GM10248 (cell line): ENCODE measurements at regions of chr14 and their contacts with region 1.

Region 1: DNA sequence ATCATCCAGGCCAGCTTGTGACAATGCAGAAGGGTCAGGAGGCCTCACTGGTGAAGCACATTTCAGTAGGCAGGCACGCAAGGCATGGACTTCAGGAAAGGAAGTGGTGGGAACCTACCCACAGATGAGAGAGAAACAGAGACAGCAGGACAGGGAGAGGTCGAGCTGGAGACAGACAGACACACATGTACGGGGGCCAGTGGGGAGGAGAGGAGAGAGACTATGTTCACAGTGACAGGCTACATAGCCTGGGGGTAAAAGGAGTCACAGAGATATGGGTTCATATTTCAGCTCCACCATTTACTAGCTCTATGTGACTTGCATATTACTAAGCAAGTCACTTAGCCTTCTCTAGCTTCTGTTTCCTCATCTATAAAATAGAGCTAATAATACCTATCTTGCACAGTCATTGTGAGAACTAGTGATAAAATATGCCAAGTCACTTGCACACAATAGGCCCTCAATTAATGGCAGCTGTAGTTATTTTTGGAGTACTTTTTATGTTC is 91.1 kb upstream of the FUT8 start:
- DNase-seq: no peak
- CTCF ChIP-seq: no peak

Region 2: GRCh38 chr14:65287264-65288131 is 33.9 kb before region 1 on chr14:
- CTCF ChIA-PET with region 1: interaction called, 19 read pairs
- POLR2A ChIA-PET with region 1: no interaction called
- DNase-seq: peak; percentile 81
- CTCF ChIP-seq: no peak

Region 3: GRCh38 chr14:65302571-65303189 is 18.7 kb before region 1 on chr14:
- CTCF ChIA-PET with region 1: interaction called, 41 read pairs
- POLR2A ChIA-PET with region 1: interaction called, 50 read pairs
- DNase-seq: peak; percentile 67
- CTCF ChIP-seq: no peak

Region 4: DNA sequence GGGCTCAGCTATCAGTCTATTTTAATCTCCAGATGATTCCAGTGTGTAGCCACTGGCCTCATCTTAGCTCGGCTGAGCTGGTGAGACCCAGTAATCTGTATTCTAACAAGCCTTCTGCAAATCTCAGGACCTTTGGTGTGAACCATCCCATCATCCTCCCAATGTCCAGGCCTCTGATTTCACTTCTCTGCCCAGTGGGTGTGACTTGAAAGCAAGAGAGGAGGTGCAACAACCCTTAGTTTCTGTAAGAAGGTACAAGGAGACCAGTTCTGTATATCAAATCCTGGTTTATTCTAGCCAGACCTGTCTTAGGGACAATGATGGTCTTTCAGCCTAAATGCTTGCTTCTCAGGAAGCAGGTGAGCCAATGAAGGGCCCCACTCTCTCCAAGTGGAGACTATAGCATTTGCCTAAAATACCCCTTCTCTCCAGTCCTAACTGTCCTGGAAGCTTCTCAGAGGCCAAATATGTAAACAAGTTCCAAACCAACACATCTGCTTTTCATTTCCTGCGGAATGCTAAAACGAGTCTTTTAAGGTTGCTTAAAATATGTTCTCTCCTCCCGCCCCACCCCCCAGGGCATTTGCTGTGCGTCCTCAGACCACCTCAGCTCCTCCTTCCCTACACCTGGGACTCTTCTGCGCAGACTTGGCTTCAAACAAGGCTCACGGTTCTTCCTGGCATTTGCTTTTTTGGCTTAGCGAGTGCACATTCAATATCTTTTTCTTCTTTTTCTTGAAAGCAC is 12.7 kb after region 1 on chr14:
- CTCF ChIA-PET with region 1: interaction called, 40 read pairs
- POLR2A ChIA-PET with region 1: no interaction called
- DNase-seq: no peak
- CTCF ChIP-seq: no peak

Region 5: DNA sequence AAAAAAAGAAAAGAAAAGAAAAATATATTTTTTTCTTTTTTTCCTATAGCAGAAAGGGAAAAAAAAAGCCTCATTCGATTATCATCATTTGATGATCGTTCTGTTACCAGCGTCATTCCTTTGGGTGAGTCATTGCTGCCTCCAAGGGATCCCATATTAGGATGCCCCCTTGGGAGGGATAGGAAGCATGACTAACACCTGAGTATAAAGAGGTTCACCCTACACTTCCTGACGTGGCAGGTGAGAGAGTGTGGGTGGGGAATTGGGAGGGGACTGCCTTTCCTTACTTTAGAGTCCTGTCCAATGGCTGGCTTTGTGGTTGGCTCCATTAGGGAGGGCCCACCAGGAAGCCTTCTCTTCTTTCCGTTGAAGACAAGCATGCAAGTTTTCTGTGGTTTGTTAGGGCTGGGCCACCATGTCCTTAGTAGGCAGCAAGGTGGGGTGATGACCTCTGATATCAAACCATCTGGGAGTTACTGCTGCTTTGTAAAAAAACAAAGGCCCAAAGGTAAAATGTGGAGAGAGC is 35.0 kb after region 1 on chr14:
- CTCF ChIA-PET with region 1: interaction called, 14 read pairs
- POLR2A ChIA-PET with region 1: interaction called, 5 read pairs
- DNase-seq: no peak
- CTCF ChIP-seq: no peak

Region 6: DNA sequence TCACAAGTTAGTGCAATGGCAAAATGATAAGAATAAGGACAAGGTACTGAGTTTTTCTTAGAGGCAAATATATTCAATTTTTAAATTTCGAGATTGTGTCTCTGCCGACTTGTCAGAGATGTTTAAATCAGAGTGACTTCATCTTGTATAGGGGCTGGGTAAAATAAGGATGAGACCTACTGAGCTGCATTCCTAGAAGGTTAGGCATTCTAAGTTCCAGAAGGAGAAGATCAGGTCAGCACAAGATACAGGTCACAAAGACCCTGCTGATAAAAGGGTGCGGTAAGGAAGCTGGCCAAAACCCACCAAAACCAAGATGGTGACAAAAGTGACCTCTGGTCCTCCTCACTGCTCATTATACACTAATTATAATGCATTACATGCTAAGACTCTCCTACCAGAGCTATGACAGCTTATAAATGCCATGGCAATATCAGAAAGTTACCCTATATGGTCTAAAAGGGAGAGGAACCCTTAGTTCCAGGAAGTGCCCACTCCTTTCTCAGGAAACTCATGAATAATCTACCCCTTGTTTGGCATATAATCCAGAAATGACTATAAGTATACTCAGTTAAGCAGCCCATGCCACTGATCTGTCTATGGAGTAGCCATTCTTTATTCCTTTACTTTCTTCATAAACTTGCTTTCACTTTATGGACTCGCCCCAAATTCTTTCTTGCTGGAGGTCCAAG is 48.0 kb after region 1 on chr14:
- CTCF ChIA-PET with region 1: no interaction called
- POLR2A ChIA-PET with region 1: no interaction called
- DNase-seq: no peak
- CTCF ChIP-seq: no peak